SK-N-SH (cell line): ENCODE measurements at regions of chr9 and their contacts with region 1.

Region 1: DNA sequence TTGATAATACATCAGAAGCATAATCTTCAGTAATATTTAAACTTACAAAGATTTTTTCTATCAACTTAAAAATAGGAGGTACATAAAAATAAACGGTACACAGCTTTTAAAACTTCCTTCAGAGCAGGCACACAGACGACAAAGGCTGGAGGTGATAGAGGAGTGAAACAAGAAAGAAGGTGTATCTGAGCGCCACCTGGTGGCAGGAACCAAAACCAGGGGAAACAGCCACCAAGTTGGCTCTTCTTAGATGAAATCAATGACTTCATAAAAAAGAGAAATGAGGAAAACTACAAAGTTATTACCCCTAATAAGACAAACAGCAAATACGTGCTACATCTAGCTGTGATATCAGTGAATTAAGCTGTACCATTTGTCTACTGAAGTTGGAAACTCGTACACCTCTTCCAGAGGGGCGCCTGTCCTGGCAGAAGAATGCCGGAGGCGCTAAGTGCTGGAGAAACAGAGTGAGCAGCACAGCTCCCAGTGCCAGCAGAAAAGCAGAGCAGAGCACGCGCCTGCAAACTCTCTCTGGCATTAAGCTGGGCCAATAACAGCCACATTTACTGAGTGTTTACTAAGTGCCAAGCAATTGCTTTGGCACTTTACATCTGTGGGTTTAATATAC is 85.9 kb downstream of the SETX start:
- DNase-seq: peak; percentile 70
- H3K4me3 ChIP-seq: no peak overlapping the region; a peak in 1 of 4 replicates
- H3K27ac ChIP-seq: peak overlapping the region; percentile 18 to 55; a peak in 2 of 4 replicates
- H3K4me1 ChIP-seq: peaks cover 0 to 3% of the 10 kb centered on the region in 2 experiments; a peak in 1 of 4 replicates
- H3K27me3 ChIP-seq: no peaks in the 10 kb centered on the region
- CTCF ChIP-seq: peak; percentile 97
- EP300 ChIP-seq: no peak
- RAD21 ChIP-seq: peak; percentile 78

Region 2: DNA sequence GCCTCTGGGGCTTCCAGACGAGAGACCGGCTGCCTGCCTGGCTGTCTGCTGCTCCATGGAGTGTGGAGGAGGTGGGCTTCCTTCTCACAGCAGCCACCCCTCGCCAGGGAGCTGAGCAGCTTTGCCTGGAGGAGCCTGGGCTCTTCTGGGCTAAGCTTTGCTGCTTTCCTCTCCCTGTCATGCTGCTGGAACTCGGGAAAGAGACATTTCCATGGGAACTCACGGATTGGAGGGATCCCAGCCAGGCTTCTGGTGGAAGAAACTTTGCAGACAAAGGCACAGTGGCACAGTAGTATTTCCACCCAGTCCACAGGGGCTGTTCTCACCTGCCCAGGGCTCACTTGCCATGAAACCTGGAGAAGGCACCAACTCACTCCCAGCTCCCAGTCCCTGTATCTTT is 112.6 kb before region 1 on chr9:
- CTCF ChIA-PET with region 1: no interaction called
- POLR2A ChIA-PET with region 1: no interaction called
- DNase-seq: no peak
- H3K4me3 ChIP-seq: no peak overlapping the region
- H3K27ac ChIP-seq: no peak overlapping the region
- H3K4me1 ChIP-seq: peaks cover 0 to 8% of the 10 kb centered on the region in 2 experiments; a peak in 1 of 4 replicates
- H3K27me3 ChIP-seq: peaks cover 10% of the 10 kb centered on the region; the same call in 1 of the 2 replicates
- CTCF ChIP-seq: no peak
- EP300 ChIP-seq: no peak
- RAD21 ChIP-seq: no peak

Region 3: DNA sequence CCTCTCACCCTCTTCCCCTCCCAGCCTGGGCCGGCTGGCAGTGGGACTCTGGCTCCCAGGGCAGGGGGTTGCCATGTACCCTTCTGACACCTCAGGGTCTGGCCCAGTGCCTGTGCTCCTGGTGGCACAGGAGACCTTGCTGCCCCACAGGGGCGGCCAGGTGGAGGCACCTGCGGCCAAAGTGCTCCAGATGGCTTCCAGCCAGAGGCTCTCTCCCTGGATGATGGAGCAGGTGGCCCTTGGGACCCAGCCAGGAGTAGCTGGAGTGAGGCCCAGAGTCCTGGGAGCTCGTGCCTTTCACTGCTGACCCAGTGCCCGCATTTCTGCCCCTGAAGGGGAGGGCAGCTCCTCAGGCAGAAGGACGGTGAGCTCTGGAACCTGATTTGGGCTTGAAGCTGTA is 19.7 kb before region 1 on chr9:
- CTCF ChIA-PET with region 1: interaction called, 13 read pairs
- POLR2A ChIA-PET with region 1: no interaction called
- DNase-seq: no peak
- H3K4me3 ChIP-seq: no peak overlapping the region
- H3K27ac ChIP-seq: no peak overlapping the region
- H3K4me1 ChIP-seq: no peaks in the 10 kb centered on the region; a peak in 1 of 4 replicates
- H3K27me3 ChIP-seq: no peaks in the 10 kb centered on the region
- CTCF ChIP-seq: no peak
- EP300 ChIP-seq: no peak
- RAD21 ChIP-seq: no peak

Region 4: DNA sequence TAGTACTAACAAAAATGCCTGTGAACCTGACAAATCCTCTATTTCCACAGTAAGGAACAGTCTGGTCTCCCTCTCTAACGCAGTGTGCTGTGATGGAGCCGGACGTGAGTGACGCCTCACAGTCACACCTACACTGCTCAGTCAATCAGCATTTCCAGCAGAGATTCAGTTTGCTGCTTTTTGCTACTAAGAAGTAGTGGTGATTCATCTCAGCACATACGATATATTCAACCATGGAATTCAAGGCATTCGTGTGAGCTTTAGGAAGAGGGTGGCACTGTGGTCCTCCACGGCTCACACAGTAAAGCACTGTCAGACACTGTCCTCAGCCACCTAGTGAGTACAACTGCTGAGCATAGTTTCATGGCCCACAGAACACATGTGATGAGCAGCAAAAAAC is 15.0 kb after region 1 on chr9:
- CTCF ChIA-PET with region 1: interaction called, 18 read pairs
- POLR2A ChIA-PET with region 1: no interaction called
- DNase-seq: no peak
- H3K4me3 ChIP-seq: no peak overlapping the region
- H3K27ac ChIP-seq: no peak overlapping the region
- H3K4me1 ChIP-seq: no peaks in the 10 kb centered on the region
- H3K27me3 ChIP-seq: no peaks in the 10 kb centered on the region
- CTCF ChIP-seq: no peak
- EP300 ChIP-seq: no peak
- RAD21 ChIP-seq: no peak

Region 5: DNA sequence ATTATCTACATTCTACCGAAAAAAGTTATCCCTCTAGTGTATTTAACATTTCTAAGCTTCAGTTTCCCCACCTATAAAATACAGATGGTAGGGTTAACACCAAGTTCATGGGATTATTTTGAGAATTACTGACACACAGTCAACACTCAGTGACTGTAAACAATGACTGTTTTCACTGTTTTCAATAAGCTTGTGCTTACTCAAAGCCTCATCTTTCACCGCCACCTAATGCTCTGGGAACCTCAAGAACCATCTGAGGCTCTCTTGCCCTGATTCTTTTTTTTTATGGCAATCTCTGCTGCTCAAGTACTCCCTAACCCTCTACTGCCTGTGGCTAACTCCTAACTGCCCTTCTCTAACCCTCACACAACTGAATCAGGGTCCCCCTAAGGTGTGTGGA is 26.3 kb after region 1 on chr9:
- CTCF ChIA-PET with region 1: interaction called, 14 read pairs
- POLR2A ChIA-PET with region 1: no interaction called
- DNase-seq: no peak
- H3K4me3 ChIP-seq: no peak overlapping the region
- H3K27ac ChIP-seq: no peak overlapping the region
- H3K4me1 ChIP-seq: peaks cover 0 to 4% of the 10 kb centered on the region in 2 experiments; a peak in 2 of 4 replicates
- H3K27me3 ChIP-seq: no peaks in the 10 kb centered on the region
- CTCF ChIP-seq: no peak
- EP300 ChIP-seq: no peak
- RAD21 ChIP-seq: no peak